ENCODE measurements at regions of chr1 and their contacts with region 1.

Region 1: GRCh38 chr1:183411091-183411490 is 7.1 kb downstream of the NMNAT2 start:
- DNase-seq: peak; percentile 71
- ATAC-seq: peak; percentile 91
- H3K4me3 ChIP-seq: no peak overlapping the region
- H3K27ac ChIP-seq: peak overlapping the region; percentile 58
- H3K4me1 ChIP-seq: peaks cover 27% of the 10 kb centered on the region
- H3K27me3 ChIP-seq: no peaks in the 10 kb centered on the region
- CTCF ChIP-seq: no peak

Region 2: GRCh38 chr1:183432548-183432875 is 21.4 kb after region 1 on chr1:
- CTCF ChIA-PET with region 1: no interaction called
- POLR2A ChIA-PET with region 1: no interaction called
- intact Hi-C with region 1: loop called (anchors 2 kb)
- DNase-seq: peak; percentile 84
- ATAC-seq: peak; percentile 98
- H3K4me3 ChIP-seq: no peak overlapping the region
- H3K27ac ChIP-seq: peak overlapping the region; percentile 83
- H3K4me1 ChIP-seq: peaks cover 26% of the 10 kb centered on the region
- H3K27me3 ChIP-seq: no peaks in the 10 kb centered on the region
- CTCF ChIP-seq: no peak

Region 3: GRCh38 chr1:183646776-183647175 is 235.7 kb after region 1 on chr1:
- CTCF ChIA-PET with region 1: no interaction called
- POLR2A ChIA-PET with region 1: no interaction called
- intact Hi-C with region 1: no loop called
- DNase-seq: no peak
- ATAC-seq: no peak
- H3K4me3 ChIP-seq: no peak overlapping the region
- H3K27ac ChIP-seq: no peak overlapping the region
- H3K4me1 ChIP-seq: no peaks in the 10 kb centered on the region
- H3K27me3 ChIP-seq: no peaks in the 10 kb centered on the region
- CTCF ChIP-seq: no peak

Measured in PC-3 (cell line).